ENCODE measurements at regions of chr12 and their contacts with region 1.

Region 1: DNA sequence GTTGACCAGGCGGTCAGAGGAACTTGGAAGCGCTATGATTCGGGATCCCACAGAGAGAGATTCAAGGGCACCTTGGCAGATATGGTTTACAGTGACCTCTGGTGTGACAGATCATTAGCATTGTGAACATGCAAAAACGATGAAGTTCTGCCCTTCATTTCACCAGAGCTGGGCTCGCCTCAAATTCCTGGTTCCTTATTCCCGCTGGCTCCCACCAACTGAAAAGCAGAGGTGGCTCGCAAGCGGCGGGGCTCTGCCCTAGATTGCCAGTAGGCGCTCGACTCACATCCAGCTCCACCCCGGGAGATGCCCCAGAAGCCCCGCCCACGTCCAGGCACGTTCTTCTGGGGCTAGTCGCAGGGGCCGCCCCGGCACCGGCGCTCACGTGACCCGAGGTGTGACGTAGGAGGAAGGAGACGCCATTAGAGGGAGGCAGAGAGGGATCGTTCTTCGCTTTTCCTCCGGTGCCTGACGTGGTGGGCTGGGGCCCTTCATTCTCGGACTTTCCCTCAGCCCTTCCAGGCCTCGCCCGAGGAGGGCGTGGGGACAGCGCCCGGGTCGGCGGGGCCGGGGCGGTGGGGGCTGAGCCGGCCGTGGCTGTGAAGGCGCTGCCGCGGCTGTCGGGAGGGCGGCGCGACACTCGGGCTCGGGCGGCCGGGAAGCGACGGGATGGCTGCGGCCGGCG is at the start of gene RAB21:
- DNase-seq: peak; percentile 97
- H3K4me3 ChIP-seq: peak within 1 kb of the TSS; percentile 81
- H3K4me3 Mint-ChIP-seq: peak within 1 kb of the TSS; percentile 86
- H3K27ac Mint-ChIP-seq: peak within 1 kb of the TSS; percentile 96
- H3K4me1 ChIP-seq: peaks cover 8% of the 10 kb centered on the region; the same call in 1 of the 2 replicates
- H3K4me1 Mint-ChIP-seq: peaks cover 12% of the 10 kb centered on the region
- H3K27me3 ChIP-seq: no peaks in the 10 kb centered on the region
- H3K27me3 Mint-ChIP-seq: peaks cover 5% of the 10 kb centered on the region
- CTCF ChIP-seq: peak in 1 of 2 experiments; percentile 22
- total RNA-seq, gene RAB21: 69.6 and 72.0 TPM in 2 replicates

Region 2: DNA sequence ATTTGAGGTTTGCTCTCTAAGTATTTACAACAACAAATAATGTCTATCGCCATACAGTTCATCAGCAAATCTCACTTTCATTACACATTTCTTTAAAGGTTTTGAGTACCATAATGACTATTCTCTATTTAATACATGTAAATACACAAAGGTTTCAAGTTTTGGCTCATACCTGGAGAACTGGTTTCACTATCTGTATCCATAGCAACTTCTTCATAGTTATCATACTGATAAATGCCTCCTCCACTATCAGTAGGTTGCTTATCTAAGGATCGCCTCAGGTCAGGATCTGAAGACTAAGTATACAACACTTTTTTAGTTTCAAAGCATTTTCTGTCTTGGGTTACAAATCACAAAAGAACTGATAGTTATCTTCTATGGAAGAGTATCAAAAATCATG is 112.3 kb before region 1 on chr12:
- CTCF ChIA-PET with region 1: no interaction called
- POLR2A ChIA-PET with region 1: no interaction called
- intact Hi-C with region 1: loop called (anchors 1 kb)
- DNase-seq: peak in 1 of 2 experiments; percentile 76
- H3K4me3 ChIP-seq: no peak overlapping the region
- H3K4me3 Mint-ChIP-seq: peak overlapping the region; percentile 55
- H3K27ac Mint-ChIP-seq: peak overlapping the region; percentile 93
- H3K4me1 ChIP-seq: peaks cover 26% of the 10 kb centered on the region
- H3K4me1 Mint-ChIP-seq: peaks cover 23% of the 10 kb centered on the region
- H3K27me3 ChIP-seq: no peaks in the 10 kb centered on the region
- H3K27me3 Mint-ChIP-seq: no peaks in the 10 kb centered on the region
- CTCF ChIP-seq: no peak

Region 3: GRCh38 chr12:71810905-71811304 is 56.3 kb after region 1 on chr12:
- CTCF ChIA-PET with region 1: no interaction called
- POLR2A ChIA-PET with region 1: no interaction called
- intact Hi-C with region 1: no loop called
- DNase-seq: no peak
- H3K4me3 ChIP-seq: no peak overlapping the region
- H3K4me3 Mint-ChIP-seq: no peak overlapping the region
- H3K27ac Mint-ChIP-seq: no peak overlapping the region
- H3K4me1 ChIP-seq: no peaks in the 10 kb centered on the region
- H3K4me1 Mint-ChIP-seq: no peaks in the 10 kb centered on the region
- H3K27me3 ChIP-seq: no peaks in the 10 kb centered on the region
- H3K27me3 Mint-ChIP-seq: peaks cover 12% of the 10 kb centered on the region
- CTCF ChIP-seq: no peak

Measured in Caco-2 (cell line).